Lower leg skin (tissue), 4 donors: ENCODE measurements at regions of chr3 and their contacts with region 1.

Region 1: DNA sequence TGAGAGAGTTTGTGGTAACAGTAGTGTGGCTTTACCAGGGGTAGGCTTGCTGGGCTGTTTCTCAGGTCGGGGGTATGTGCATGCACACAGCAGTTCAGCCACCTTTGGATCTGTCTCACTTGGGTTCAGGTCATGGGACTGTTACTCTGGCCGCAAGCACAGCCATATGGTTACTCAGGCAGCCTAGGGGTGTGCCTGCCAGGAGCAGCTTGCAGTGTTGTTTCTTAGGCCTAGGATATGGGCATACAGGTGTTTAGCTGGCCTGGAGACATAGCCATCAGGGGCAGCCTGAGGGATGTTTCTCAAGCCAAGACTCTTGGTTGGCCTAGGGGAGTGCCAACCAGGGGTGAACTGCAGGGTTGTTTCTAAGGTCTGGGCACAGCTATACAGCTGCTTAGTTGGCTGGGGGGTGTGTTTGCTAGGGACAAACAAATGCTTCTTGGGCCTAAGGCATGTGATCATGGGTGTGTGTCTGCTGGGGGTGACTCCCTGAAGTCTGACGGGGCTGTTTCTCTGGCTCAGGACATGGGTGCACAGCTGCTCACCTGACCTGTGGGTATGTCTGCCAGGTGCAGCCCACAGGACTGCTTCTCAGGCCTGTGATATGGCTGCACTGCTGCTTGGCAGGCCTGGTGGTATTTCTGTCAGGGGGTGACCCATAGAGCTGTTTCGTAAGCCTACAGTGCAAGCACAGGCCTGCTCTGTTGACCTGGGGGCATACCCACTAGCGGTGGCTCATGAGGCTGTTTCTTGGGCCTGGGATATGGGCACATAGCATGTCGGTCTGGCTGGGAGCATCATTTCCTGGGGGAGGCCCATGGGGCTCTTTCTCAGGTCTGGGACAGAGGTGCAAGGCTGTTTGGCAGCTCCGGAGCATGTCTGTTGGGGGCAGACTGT is 168.0 kb upstream of the THRB start:
- DNase-seq: no peak
- H3K4me3 ChIP-seq: no peak overlapping the region
- CTCF ChIP-seq: no peak
- POLR2A ChIP-seq: no peak

Region 2: GRCh38 chr3:24235121-24235520 is 427.6 kb before region 1 on chr3:
- intact Hi-C with region 1: no loop called
- DNase-seq: no peak
- H3K4me3 ChIP-seq: no peak overlapping the region
- CTCF ChIP-seq: no peak
- POLR2A ChIP-seq: no peak

Region 3: GRCh38 chr3:24648063-24648462 is 14.6 kb before region 1 on chr3:
- intact Hi-C with region 1: loop called (anchors 1 kb)
- DNase-seq: no peak
- H3K4me3 ChIP-seq: no peak overlapping the region
- CTCF ChIP-seq: no peak
- POLR2A ChIP-seq: no peak